ENCODE measurements at regions of chr17 and their contacts with region 1.

Region 1: DNA sequence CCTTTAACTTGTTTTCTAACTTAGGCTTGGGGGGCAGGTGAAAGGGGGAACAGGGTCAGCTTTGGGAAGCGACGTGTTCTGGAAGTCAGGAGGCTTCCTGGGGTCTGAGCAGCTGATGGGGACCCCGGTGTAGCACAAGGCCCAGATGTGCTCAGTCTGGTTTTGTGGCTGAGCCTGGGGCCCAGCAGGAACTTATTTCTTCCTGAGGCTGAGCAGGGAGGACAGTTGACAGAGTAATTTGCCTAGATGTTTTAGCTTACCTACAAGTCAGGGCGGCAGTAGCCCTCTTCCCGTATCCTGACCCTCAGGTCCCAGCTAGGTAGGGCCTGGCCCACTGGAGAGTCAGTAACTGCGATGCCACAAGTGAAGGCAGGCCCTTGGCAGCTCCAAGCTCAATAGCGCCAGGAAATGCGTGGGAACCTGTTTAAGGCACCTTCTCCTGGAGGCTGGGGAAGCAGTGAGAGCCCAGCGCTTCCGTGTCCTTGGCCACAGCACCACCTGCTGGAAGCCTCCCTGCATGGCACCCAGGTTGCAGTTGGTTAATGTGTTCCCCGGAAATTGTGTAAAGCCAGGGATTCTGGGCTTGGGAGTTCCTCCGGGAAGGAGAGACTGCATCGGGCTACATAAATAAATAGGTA is 5.2 kb downstream of the CCR7 start:
- DNase-seq: peak; percentile 72
- CTCF ChIP-seq: peak; percentile 97

Region 2: GRCh38 chr17:40615295-40615988 is 55.4 kb after region 1 on chr17:
- in situ Hi-C with region 1: loop called (anchors 10 kb)
- DNase-seq: peak; percentile 77
- CTCF ChIP-seq: peak; percentile 59

Measured in GM13977 (cell line).